Activated CD8-positive, alpha-beta T cell treated with anti-CD3 and anti-CD28 coated beads for 36 hours (primary cell): ENCODE measurements at regions of chr16 and their contacts with region 1.

Region 1: DNA sequence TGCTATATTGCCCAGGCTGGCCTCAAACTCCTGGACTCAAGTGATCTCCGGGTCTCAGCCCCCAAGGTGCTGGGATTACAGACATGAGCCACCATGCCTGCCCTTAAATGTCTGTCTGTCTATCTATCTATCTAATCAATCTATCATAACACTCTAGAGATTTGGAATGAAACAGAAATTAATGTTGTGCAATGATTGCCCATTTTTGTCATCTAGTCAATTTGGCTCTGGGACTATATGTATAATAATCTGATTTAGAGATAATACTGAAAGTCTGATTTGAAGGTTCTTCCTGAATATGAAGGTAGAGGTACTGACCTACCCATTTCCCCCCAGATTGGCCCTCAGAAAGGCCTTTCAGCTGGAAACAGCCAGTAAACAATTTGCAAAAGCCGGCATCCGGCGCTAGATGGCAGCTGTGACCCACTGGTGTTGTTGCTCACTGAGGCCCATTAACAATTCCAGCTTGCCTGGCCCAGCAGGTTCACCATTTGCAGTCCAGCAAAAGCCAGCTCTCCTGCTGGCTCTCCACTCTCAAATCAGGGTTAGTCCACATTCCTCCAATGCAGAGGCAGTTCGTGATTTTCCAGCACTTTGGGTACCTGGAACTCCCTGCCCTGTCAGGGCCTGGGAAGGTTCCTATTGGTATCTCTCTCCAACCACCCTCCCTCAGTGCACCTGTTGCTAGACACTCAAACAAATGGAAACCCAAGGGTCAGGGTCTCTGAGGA is 22.9 kb upstream of the C16orf87 start:
- DNase-seq: peak; percentile 73
- ATAC-seq: peak; percentile 51
- H3K4me3 Mint-ChIP-seq: no peak overlapping the region
- H3K27ac Mint-ChIP-seq: no peak overlapping the region
- H3K4me1 Mint-ChIP-seq: no peaks in the 10 kb centered on the region
- H3K27me3 Mint-ChIP-seq: no peaks in the 10 kb centered on the region
- CTCF ChIP-seq: peak; percentile 80

Region 2: DNA sequence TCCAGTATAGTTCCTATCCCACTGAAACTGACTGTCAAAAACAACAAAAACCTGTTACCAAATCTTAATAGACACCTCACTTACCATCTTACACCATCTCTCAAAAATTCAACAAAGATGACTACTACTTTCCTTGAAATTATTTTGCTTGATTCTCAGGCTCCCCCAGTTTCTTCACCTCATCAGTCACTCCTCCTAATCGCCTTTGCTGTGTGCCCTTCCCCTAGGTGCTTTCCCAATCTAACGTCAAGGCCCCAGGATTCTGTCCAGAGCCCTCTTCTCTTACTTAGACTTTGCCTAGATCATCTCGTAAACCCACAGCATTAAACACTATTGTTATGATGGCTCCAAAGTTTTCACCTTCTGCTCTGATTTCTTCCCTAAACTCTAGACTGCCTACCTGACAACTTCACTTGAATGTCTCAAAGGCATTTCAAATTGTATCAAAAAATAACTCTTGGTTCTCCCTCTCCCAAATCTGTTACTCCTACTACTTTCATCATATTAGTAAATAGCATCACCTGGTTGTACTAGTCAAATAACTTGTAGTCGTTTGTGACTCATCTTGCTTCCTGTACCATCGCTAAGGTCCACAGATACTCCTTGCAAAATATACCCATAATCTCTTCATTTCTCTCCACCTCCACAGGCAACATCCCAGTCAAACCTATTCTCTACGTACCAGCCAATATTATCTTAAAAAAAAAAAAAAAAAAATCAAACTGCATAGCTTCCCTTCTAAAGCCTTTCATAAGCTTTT is 40.9 kb before region 1 on chr16:
- CTCF ChIA-PET with region 1: no interaction called
- POLR2A ChIA-PET with region 1: no interaction called
- intact Hi-C with region 1: no loop called
- DNase-seq: no peak
- ATAC-seq: peak; percentile 70
- H3K4me3 Mint-ChIP-seq: no peak overlapping the region
- H3K27ac Mint-ChIP-seq: peak overlapping the region; percentile 64
- H3K4me1 Mint-ChIP-seq: peaks cover 41% of the 10 kb centered on the region
- H3K27me3 Mint-ChIP-seq: no peaks in the 10 kb centered on the region
- CTCF ChIP-seq: no peak

Region 3: GRCh38 chr16:46871587-46871986 is 17.7 kb after region 1 on chr16:
- CTCF ChIA-PET with region 1: interaction called, 23 read pairs
- POLR2A ChIA-PET with region 1: no interaction called
- intact Hi-C with region 1: no loop called
- DNase-seq: no peak
- ATAC-seq: no peak
- H3K4me3 Mint-ChIP-seq: no peak overlapping the region
- H3K27ac Mint-ChIP-seq: no peak overlapping the region
- H3K4me1 Mint-ChIP-seq: no peaks in the 10 kb centered on the region
- H3K27me3 Mint-ChIP-seq: peaks cover 4% of the 10 kb centered on the region
- CTCF ChIP-seq: no peak

Region 4: DNA sequence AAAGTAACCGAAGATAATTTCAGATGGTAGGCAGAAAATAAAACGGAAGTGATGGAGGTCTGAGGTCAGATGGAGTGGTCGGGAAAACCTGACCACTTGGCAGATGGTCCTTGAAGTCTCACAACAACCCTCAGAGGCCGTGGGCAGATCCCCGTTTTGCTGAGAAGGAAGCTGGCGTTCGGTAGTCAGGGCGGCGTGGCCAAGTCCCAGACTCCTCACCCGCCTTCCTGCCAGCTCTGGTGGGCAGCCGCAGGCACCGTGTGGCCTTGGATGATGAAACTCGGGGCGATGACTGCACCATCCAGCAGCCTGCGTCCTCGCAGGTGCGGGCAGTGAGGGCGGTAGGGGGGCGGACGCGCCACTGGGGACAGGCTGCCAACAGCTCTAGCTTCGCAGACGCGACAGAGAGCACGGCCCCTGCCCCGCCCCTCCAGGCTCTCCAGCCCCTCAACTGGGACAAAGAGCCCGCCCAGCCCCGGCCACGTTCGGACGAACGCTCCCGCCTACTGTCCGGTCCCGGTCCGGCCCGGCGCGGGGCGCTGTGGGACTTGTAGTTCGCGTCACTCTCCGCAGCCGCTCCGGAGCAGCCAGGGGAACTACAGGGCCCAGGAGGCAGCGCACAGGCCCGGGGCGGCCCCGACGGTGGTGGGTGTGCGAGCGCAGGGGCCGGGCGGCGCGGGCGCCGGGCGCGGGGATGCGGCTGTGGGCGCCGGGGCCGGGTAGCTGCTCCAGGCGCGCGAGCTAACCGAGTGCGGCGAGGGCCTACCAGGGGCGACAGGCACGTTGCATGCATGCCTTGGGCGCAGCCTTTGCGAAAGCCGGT is 30.0 kb after region 1 on chr16 and contains the start of gene GPT2:
- CTCF ChIA-PET with region 1: interaction called, 10 read pairs
- POLR2A ChIA-PET with region 1: no interaction called
- intact Hi-C with region 1: no loop called
- DNase-seq: peak; percentile 91
- ATAC-seq: peak; percentile 95
- H3K4me3 Mint-ChIP-seq: peak within 1 kb of the TSS; percentile 80
- H3K27ac Mint-ChIP-seq: peak within 1 kb of the TSS; percentile 93
- H3K4me1 Mint-ChIP-seq: peaks cover 16% of the 10 kb centered on the region
- H3K27me3 Mint-ChIP-seq: peaks cover 22% of the 10 kb centered on the region
- CTCF ChIP-seq: no peak
- total RNA-seq, gene GPT2: 39.3 to 50.6 TPM

Region 5: DNA sequence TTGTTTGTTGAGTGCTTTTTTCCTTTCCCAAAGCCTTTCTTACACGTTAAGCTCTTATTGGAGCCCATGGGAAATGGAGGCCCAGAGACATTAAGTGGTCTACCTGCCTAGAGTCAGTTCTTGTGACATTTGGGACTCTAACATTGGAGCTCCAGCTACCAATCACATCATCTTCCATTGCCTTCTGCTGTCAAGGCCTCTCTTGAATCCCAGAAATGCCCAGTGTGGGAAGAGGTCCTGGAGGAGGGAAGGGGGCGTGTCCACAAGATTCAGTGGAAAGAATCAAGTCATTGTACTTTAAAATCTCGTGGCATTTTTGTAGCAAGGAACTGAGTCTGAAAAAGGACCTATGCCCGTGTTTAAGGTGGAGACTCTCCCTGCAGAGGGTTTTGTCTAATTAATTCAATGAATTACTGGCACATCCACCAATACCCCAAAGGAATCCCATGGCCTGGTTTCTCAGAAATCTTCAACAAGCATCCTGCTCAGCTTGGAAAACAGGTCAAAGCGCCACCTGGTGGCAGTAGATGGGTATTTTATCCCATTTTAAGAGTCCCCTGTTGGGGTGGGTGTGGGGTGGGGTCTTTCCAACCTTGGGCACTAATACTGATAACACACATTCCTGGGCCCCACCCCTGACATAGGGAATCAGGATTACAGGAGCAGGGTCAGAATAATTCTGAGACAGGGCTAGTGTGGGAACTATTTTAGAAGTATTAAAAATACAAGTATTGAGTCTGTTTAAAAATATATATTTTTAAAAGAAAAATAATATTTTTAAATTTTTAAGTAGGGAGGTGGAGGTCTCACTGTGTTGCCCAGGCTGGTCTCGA is 54.9 kb after region 1 on chr16:
- CTCF ChIA-PET with region 1: interaction called, 56 read pairs
- POLR2A ChIA-PET with region 1: interaction called, 3 read pairs
- intact Hi-C with region 1: loop called (anchors 5 kb)
- DNase-seq: peak; percentile 68
- ATAC-seq: peak; percentile 30
- H3K4me3 Mint-ChIP-seq: no peak overlapping the region
- H3K27ac Mint-ChIP-seq: no peak overlapping the region
- H3K4me1 Mint-ChIP-seq: peaks cover 9% of the 10 kb centered on the region
- H3K27me3 Mint-ChIP-seq: no peaks in the 10 kb centered on the region
- CTCF ChIP-seq: peak; percentile 79

Region 6: GRCh38 chr16:46916980-46917379 is 63.1 kb after region 1 on chr16:
- CTCF ChIA-PET with region 1: interaction called, 10 read pairs
- POLR2A ChIA-PET with region 1: no interaction called
- intact Hi-C with region 1: loop called (anchors 5 kb)
- DNase-seq: no peak
- ATAC-seq: peak; percentile 56
- H3K4me3 Mint-ChIP-seq: no peak overlapping the region
- H3K27ac Mint-ChIP-seq: no peak overlapping the region
- H3K4me1 Mint-ChIP-seq: no peaks in the 10 kb centered on the region
- H3K27me3 Mint-ChIP-seq: no peaks in the 10 kb centered on the region
- CTCF ChIP-seq: no peak